H1 (cell line): ENCODE measurements at regions of chr15 and their contacts with region 1.

Region 1: DNA sequence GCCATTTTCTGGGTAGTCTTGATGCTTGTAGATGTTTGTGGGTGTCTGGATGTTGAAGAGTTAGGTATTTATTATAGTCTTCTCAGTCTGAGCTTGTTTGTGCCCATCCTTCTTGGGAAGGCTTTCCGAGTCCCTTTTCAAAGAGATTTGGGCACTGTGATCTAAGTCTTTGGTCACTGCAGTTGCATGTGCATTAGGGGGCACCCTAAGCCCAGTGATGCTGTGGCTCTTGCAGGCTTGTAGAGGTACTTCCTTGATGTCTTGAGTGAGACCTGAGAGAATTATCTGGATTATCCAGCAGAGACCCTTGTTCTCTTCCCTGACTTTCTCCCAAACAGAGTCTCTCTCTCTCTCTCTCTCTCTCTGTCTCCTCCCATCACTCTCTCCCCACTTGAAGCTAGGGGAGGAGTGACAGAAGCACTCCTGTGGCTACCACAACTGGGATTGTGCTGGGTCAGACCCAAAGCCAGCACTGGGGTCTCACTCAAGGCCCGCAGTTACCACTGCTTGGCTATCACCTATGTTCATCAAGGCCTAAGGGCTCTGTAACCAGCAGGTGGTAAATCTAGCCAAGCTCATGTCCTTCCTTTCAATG is 68.5 kb downstream of the TMCO5A start:
- DNase-seq: peak; percentile 27 to 66
- H3K4me3 ChIP-seq: no peak overlapping the region
- H3K27ac ChIP-seq: no peak overlapping the region
- H3K4me1 ChIP-seq: no peaks in the 10 kb centered on the region
- H3K27me3 ChIP-seq: no peaks in the 10 kb centered on the region
- CTCF ChIP-seq: peak; percentile 67 to 92 (median 91)
- EP300 ChIP-seq: no peak
- POLR2A ChIP-seq: no peak
- RAD21 ChIP-seq: peak; percentile 98 to 99

Region 2: GRCh38 chr15:37907136-37907535 is 95.8 kb before region 1 on chr15:
- CTCF ChIA-PET with region 1: no interaction called
- POLR2A ChIA-PET with region 1: no interaction called
- DNase-seq: no peak
- H3K4me3 ChIP-seq: no peak overlapping the region
- H3K27ac ChIP-seq: no peak overlapping the region
- H3K4me1 ChIP-seq: no peaks in the 10 kb centered on the region; a peak in 1 of 7 replicates
- H3K27me3 ChIP-seq: no peaks in the 10 kb centered on the region
- CTCF ChIP-seq: no peak
- EP300 ChIP-seq: no peak
- POLR2A ChIP-seq: no peak
- RAD21 ChIP-seq: no peak

Region 3: DNA sequence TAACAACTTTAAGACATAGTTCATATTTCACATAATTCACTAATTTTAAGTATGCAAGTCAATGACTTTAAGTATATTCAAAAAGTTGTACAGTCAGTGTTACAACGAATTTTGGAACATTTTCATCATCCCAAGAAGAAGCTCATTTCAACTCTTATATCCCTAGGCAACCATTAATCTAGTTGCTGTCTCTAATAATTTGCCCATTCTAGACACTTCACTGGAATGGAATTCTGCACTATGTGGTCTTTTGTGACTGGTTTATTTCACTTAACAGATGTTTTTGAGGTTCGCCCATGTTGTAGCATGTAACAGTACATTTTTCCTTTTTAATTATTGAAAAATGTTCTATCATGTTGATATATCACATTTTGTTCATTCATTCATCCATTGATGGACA is 145.5 kb after region 1 on chr15:
- CTCF ChIA-PET with region 1: no interaction called
- POLR2A ChIA-PET with region 1: no interaction called
- DNase-seq: no peak
- H3K4me3 ChIP-seq: no peak overlapping the region
- H3K27ac ChIP-seq: no peak overlapping the region
- H3K4me1 ChIP-seq: no peaks in the 10 kb centered on the region
- H3K27me3 ChIP-seq: no peaks in the 10 kb centered on the region
- CTCF ChIP-seq: no peak
- EP300 ChIP-seq: no peak
- POLR2A ChIP-seq: no peak
- RAD21 ChIP-seq: no peak

Region 4: DNA sequence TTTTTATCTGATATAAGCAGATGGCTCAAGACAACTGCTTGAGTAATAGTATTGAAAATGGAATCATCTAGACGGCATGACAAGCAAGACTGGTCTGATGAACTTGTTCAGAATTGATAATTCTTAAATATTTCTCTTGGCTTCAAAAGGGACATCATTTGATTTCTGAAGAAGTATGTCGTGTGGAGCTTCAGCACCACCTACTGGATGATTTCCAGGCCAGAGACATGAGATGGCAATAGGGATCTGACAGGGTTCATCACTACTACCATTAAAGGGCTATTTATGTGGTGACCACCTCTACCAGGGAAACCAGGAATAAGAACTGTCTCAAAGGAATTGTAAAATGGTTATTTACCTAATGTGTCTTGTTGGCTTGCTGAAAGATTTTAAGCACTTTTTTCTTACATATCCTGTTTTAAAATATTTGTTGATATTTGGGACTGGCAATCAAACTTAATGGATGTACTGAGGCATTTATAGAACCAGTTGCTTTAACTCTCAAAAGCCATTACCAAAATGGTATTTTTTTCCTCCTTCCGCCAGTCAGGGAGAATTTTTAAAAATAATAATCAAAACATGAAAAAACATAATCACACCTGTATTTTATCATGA is 351.4 kb after region 1 on chr15:
- CTCF ChIA-PET with region 1: interaction called, 53 read pairs
- POLR2A ChIA-PET with region 1: no interaction called
- DNase-seq: peak in 1 of 2 experiments; percentile 56
- H3K4me3 ChIP-seq: no peak overlapping the region
- H3K27ac ChIP-seq: no peak overlapping the region
- H3K4me1 ChIP-seq: peaks cover 0 to 6% (median 0%) of the 10 kb centered on the region in 4 experiments; a peak in 1 of 7 replicates
- H3K27me3 ChIP-seq: no peaks in the 10 kb centered on the region
- CTCF ChIP-seq: peak in 2 of 3 experiments; percentile 61 to 78; a peak in 3 of 4 replicates
- EP300 ChIP-seq: no peak
- POLR2A ChIP-seq: no peak
- RAD21 ChIP-seq: peak; percentile 83 to 91

Region 5: GRCh38 chr15:38378161-38378560 is 375.2 kb after region 1 on chr15:
- CTCF ChIA-PET with region 1: interaction called, 71 read pairs
- POLR2A ChIA-PET with region 1: no interaction called
- DNase-seq: no peak
- H3K4me3 ChIP-seq: no peak overlapping the region
- H3K27ac ChIP-seq: no peak overlapping the region
- H3K4me1 ChIP-seq: no peaks in the 10 kb centered on the region
- H3K27me3 ChIP-seq: no peaks in the 10 kb centered on the region
- CTCF ChIP-seq: no peak
- EP300 ChIP-seq: no peak
- POLR2A ChIP-seq: no peak
- RAD21 ChIP-seq: no peak

Region 6: DNA sequence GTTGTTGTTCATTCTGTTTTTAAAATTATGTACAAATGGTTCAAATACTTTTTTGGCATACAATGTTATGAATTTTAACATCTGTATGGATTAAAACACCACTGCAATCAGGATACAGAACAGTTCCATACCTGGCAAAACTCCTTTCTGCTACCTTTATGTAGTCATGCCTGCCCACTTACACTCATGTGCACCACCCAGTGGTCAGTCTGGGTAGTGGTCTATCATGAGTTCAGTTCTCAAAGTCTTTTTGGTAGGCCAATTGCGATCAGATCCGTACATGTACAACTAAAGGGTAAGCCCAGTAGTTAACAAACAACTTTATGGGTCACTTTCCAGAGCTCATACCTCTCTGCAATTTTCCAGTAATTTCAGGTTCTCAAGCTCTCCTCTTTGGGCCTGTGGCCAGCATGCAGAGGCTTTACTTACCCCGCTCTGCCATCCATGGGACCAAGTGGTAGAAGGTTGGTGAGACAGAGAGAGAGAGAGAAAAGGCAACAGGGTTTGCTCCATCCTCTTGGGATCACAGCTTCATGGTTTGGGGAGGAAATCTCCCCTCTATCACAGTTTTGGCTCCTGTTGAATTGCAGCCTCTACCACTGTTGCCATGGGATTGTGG is 387.1 kb after region 1 on chr15:
- CTCF ChIA-PET with region 1: interaction called, 71 read pairs
- POLR2A ChIA-PET with region 1: no interaction called
- DNase-seq: peak in 1 of 2 experiments; percentile 89
- H3K4me3 ChIP-seq: no peak overlapping the region
- H3K27ac ChIP-seq: no peak overlapping the region
- H3K4me1 ChIP-seq: no peaks in the 10 kb centered on the region
- H3K27me3 ChIP-seq: no peaks in the 10 kb centered on the region
- CTCF ChIP-seq: peak; percentile 40 to 90 (median 76)
- EP300 ChIP-seq: no peak
- POLR2A ChIP-seq: no peak
- RAD21 ChIP-seq: peak; percentile 77 to 84

Region 7: GRCh38 chr15:38414357-38414756 is 411.4 kb after region 1 on chr15:
- CTCF ChIA-PET with region 1: interaction called, 15 read pairs
- POLR2A ChIA-PET with region 1: no interaction called
- DNase-seq: peak; percentile 38 to 50
- H3K4me3 ChIP-seq: no peak overlapping the region
- H3K27ac ChIP-seq: no peak overlapping the region
- H3K4me1 ChIP-seq: no peaks in the 10 kb centered on the region
- H3K27me3 ChIP-seq: no peaks in the 10 kb centered on the region
- CTCF ChIP-seq: peak; percentile 73 to 83 (median 82)
- EP300 ChIP-seq: no peak
- POLR2A ChIP-seq: no peak
- RAD21 ChIP-seq: peak; percentile 92 to 93

Region 8: GRCh38 chr15:38421069-38421690 is 418.2 kb after region 1 on chr15:
- CTCF ChIA-PET with region 1: interaction called, 12 read pairs
- POLR2A ChIA-PET with region 1: no interaction called
- DNase-seq: no peak
- H3K4me3 ChIP-seq: no peak overlapping the region
- H3K27ac ChIP-seq: no peak overlapping the region
- H3K4me1 ChIP-seq: no peaks in the 10 kb centered on the region
- H3K27me3 ChIP-seq: no peaks in the 10 kb centered on the region
- CTCF ChIP-seq: no peak
- EP300 ChIP-seq: no peak
- POLR2A ChIP-seq: no peak
- RAD21 ChIP-seq: no peak